Activated B cell treated with CpG ODN at 0.5 μM for 24 hours (primary cell): ENCODE measurements at regions of chr21 and their contacts with region 1.

Region 1: DNA sequence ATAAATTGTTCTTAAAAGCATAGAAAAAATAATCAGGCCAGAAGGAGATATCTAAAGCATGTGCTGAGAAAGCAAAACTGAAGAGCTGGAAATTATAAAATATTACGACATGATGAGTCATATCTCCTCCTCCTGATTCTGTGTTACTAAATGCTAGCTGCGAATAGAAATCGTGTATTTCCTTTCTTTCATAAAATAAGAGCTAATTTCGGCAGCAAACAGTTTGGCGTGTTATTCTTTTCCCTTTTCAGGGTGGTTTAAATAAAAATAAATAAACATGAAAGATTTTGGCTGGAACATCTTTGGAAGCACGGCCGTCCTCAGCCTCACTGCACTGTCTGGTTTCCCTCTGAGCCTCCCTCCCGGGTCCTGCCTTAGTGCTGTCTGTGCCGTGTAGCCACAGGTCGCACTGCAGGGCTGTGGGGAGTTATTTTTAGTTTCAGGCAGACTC is 56.0 kb downstream of the ADARB1 start:
- DNase-seq: no peak
- ATAC-seq: no peak
- H3K4me3 Mint-ChIP-seq: no peak overlapping the region
- H3K27ac Mint-ChIP-seq: no peak overlapping the region
- H3K4me1 Mint-ChIP-seq: peaks cover 64% of the 10 kb centered on the region
- H3K27me3 Mint-ChIP-seq: no peaks in the 10 kb centered on the region
- CTCF ChIP-seq: no peak

Region 2: GRCh38 chr21:44510508-44511210 is 619.7 kb before region 1 on chr21:
- CTCF ChIA-PET with region 1: no interaction called
- POLR2A ChIA-PET with region 1: no interaction called
- intact Hi-C with region 1: loop called (anchors 2 kb)
- DNase-seq: peak; percentile 66
- ATAC-seq: peak; percentile 72
- H3K4me3 Mint-ChIP-seq: no peak overlapping the region
- H3K27ac Mint-ChIP-seq: no peak overlapping the region
- H3K4me1 Mint-ChIP-seq: peaks cover 2% of the 10 kb centered on the region
- H3K27me3 Mint-ChIP-seq: peaks cover 10% of the 10 kb centered on the region
- CTCF ChIP-seq: no peak

Region 3: GRCh38 chr21:44892536-44893277 is 237.6 kb before region 1 on chr21:
- CTCF ChIA-PET with region 1: interaction called, 3 read pairs
- POLR2A ChIA-PET with region 1: no interaction called
- intact Hi-C with region 1: loop called (anchors 2 kb)
- DNase-seq: peak; percentile 73
- ATAC-seq: peak; percentile 85
- H3K4me3 Mint-ChIP-seq: no peak overlapping the region
- H3K27ac Mint-ChIP-seq: no peak overlapping the region
- H3K4me1 Mint-ChIP-seq: peaks cover 24% of the 10 kb centered on the region
- H3K27me3 Mint-ChIP-seq: no peaks in the 10 kb centered on the region
- CTCF ChIP-seq: peak; percentile 98

Region 4: DNA sequence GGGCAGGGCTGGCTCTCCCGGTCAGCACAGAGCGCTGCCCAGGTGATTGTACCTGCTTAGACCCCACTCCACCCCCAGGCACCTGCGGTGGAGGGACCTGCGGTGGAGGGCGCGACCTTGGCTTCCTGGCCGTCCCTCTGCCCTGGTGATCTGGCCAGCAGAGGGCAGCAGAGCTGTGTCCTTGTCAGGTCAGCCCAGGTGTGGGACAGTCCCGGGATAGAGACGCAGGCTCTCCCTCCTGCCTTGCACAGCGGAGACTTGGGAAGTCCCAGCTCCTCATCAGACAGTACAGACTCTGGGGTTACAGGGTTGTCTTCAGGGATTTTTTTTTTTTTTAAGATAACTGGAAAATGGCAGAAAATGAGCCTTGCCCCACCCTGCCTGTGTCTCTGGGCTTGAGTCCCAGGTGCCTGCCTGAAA is 180.6 kb before region 1 on chr21:
- CTCF ChIA-PET with region 1: interaction called, 224 read pairs
- POLR2A ChIA-PET with region 1: interaction called, 3 read pairs
- intact Hi-C with region 1: loop called (anchors 1 kb)
- DNase-seq: peak; percentile 76
- ATAC-seq: peak; percentile 91
- H3K4me3 Mint-ChIP-seq: no peak overlapping the region
- H3K27ac Mint-ChIP-seq: no peak overlapping the region
- H3K4me1 Mint-ChIP-seq: peaks cover 40% of the 10 kb centered on the region
- H3K27me3 Mint-ChIP-seq: no peaks in the 10 kb centered on the region
- CTCF ChIP-seq: peak; percentile 86

Region 5: GRCh38 chr21:45067462-45068285 is 62.7 kb before region 1 on chr21:
- CTCF ChIA-PET with region 1: interaction called, 10 read pairs
- POLR2A ChIA-PET with region 1: no interaction called
- intact Hi-C with region 1: no loop called
- DNase-seq: no peak
- ATAC-seq: no peak
- H3K4me3 Mint-ChIP-seq: no peak overlapping the region
- H3K27ac Mint-ChIP-seq: no peak overlapping the region
- H3K4me1 Mint-ChIP-seq: no peaks in the 10 kb centered on the region
- H3K27me3 Mint-ChIP-seq: no peaks in the 10 kb centered on the region
- CTCF ChIP-seq: no peak

Region 6: GRCh38 chr21:45098867-45099266 is 31.5 kb before region 1 on chr21:
- CTCF ChIA-PET with region 1: interaction called, 212 read pairs
- POLR2A ChIA-PET with region 1: interaction called, 3 read pairs
- intact Hi-C with region 1: loop called (anchors 1 kb)
- DNase-seq: no peak
- ATAC-seq: peak; percentile 46
- H3K4me3 Mint-ChIP-seq: no peak overlapping the region
- H3K27ac Mint-ChIP-seq: peak overlapping the region; percentile 60
- H3K4me1 Mint-ChIP-seq: peaks cover 85% of the 10 kb centered on the region
- H3K27me3 Mint-ChIP-seq: no peaks in the 10 kb centered on the region
- CTCF ChIP-seq: no peak

Region 7: DNA sequence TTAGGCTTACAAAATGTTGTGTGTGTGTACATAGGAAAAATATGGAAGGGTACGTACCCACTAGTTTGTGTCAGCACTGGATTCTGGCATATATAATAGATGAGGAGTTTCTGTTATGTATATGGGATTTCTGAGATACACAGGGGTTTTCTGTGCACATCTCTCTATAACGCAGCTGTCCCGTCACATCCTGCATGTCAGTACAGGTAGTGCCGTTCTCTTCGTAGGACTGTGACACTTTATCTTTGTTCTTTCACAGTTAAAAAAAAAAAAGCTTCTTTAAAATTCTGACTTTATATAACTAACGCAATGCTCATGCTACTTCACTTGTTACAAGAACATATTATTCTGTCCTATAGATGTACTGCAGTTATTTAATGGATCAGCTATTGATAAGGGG is 13.0 kb before region 1 on chr21:
- CTCF ChIA-PET with region 1: interaction called, 37 read pairs
- POLR2A ChIA-PET with region 1: interaction called, 3 read pairs
- intact Hi-C with region 1: no loop called
- DNase-seq: no peak
- ATAC-seq: no peak
- H3K4me3 Mint-ChIP-seq: no peak overlapping the region
- H3K27ac Mint-ChIP-seq: no peak overlapping the region
- H3K4me1 Mint-ChIP-seq: peaks cover 87% of the 10 kb centered on the region
- H3K27me3 Mint-ChIP-seq: no peaks in the 10 kb centered on the region
- CTCF ChIP-seq: no peak

Region 8: DNA sequence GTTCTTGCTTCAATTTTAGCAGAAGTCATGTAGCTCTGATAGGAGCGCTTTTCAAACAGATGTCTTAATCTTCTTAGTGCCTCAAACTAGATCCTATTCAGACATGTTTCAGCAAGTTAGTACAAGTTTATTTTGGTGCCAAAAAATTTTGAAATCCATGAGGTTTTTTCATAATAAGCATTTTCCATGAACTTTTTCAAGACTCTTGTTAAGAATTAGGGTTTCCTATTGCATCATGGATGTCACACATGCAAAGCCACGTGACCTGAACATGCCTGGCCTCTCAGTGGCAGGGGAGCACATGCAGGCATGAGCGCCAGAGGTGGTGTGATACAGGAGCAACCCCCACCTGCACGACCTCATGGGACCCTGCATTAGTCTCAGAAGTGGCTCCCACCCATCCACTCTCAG is 89.7 kb after region 1 on chr21:
- CTCF ChIA-PET with region 1: no interaction called
- POLR2A ChIA-PET with region 1: no interaction called
- intact Hi-C with region 1: no loop called
- DNase-seq: no peak
- ATAC-seq: no peak
- H3K4me3 Mint-ChIP-seq: no peak overlapping the region
- H3K27ac Mint-ChIP-seq: no peak overlapping the region
- H3K4me1 Mint-ChIP-seq: peaks cover 5% of the 10 kb centered on the region
- H3K27me3 Mint-ChIP-seq: no peaks in the 10 kb centered on the region
- CTCF ChIP-seq: no peak